GM10248 (cell line): ENCODE measurements at regions of chr2 and their contacts with region 1.

Region 1: GRCh38 chr2:102399499-102400141 is 23.3 kb upstream of the IL18RAP start:
- DNase-seq: no peak
- CTCF ChIP-seq: no peak

Region 2: DNA sequence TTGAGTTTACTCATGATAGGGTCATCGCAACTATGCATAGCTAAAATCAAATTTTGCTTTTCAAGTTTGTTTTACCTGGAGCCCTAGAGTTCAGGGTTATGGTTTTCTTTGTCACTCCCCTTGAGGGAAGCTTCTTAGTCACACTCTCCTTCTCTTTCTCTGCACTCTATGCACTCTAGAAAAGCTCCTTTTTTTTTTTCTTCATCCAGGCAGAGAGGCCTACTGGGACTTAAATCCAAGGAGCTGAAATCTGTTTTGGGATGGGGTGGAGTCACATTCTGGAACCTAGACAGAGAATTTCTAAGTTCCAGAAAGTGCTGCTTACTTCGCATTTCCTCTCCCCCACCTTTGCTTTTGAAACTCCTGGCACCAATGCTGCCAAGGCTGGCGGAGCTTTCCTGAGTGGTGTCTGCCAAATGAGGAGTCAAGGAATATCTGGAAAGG is 63.1 kb before region 1 on chr2:
- CTCF ChIA-PET with region 1: no interaction called
- POLR2A ChIA-PET with region 1: no interaction called
- DNase-seq: no peak
- CTCF ChIP-seq: no peak

Region 3: DNA sequence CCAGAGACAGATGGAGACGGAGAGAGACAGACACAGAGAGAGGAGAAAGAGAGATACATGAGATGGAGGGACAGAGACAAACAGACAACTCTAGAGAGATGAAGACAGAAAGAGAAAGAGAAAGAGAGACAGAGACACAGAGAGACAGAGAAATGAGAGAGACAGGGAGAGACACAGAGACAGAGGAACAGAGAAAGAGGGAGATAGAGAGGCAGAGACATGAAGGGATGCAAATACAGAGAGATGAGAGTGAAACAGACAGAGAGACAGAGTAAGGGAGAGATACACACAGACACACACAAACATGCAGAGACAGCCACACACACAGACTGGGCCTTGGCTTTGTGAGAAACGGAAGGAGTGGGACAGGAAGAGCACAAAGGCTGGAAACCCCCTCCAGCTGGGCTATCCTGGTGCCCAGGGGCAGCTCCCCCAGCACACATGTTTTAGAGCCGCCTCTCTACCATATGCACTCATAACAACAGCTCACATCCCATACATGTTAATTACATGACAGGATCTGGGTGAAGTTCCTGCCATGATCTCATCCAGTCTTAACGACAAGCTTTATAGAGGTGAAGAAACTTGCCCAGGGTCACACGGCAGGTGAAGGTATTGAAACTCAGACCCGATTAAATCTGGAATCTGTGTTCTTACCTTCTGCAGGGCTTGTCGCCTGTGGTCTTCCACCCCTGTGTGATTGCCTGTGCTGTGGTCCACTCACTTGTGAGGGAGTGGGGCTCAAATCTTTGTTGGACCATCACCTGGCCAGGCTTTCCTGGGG is 11.7 kb before region 1 on chr2:
- CTCF ChIA-PET with region 1: interaction called, 10 read pairs
- POLR2A ChIA-PET with region 1: no interaction called
- DNase-seq: peak; percentile 27
- CTCF ChIP-seq: no peak

Region 4: GRCh38 chr2:102410952-102411351 is 11.3 kb after region 1 on chr2:
- CTCF ChIA-PET with region 1: interaction called, 23 read pairs
- POLR2A ChIA-PET with region 1: no interaction called
- DNase-seq: no peak
- CTCF ChIP-seq: no peak

Region 5: DNA sequence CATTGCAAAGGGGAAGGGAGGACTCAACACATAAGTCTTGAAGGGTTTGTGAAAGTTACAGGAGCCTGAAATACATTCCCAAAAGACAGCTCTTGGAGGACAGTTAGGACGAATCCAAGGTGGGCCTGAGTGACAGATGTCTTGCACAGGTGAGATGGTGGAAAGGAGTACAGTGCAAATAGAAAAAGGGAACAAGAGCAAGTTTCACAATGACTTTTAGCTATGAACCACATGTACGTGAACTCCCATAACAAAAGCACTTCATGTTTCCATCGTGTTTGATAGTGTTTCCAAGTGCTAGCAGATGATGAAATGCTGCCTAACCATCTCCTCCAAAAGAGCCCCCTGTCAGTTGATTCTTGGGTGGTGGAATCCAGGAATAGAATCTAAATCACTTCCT is 25.1 kb after region 1 on chr2:
- CTCF ChIA-PET with region 1: interaction called, 11 read pairs
- POLR2A ChIA-PET with region 1: no interaction called
- DNase-seq: no peak
- CTCF ChIP-seq: no peak

Region 6: DNA sequence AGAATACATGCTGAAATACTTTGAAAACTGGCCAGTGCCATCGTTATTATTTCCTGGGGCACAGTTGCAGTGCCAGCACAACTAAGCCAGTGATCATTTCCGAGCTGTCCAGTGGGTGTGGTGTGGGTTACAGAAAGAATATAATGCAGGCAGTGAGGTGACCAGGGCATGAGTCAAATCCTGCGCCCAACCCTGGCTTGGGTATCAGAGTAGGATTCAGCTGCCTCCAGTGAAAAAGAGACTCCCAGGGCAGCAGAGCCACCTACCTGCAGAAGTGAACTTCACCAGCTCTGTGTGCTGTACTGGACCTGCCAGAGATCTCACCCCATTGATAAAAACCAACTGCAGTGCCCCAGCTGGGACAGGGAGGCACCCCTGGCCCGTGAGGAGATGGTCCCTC is 237.7 kb after region 1 on chr2:
- CTCF ChIA-PET with region 1: no interaction called
- POLR2A ChIA-PET with region 1: no interaction called
- DNase-seq: no peak
- CTCF ChIP-seq: no peak